ENCODE measurements at regions of chr16 and their contacts with region 1.

Region 1: DNA sequence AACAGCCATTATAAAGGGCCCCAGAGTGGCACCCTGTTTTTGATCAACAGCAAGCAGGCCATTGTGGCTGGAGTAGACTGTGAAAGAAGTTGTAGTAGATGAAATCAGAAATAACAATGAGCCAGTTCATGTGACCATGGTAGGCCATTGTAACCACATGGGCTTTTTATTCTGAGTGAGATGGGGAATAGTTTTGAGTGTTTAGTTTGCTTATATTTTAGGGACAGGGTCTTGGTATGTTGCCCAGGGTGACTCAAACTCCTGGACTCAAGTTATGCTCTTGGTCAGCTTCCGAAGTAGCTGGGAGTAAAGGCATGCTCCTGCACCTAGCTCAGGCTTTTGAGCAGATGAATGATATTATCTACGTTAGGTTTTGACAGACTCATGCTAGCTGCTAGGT is 12.0 kb downstream of the CBFB start:
- DNase-seq: no peak
- ATAC-seq: no peak
- H3K4me3 Mint-ChIP-seq: no peak overlapping the region
- H3K27ac Mint-ChIP-seq: no peak overlapping the region
- H3K4me1 Mint-ChIP-seq: peaks cover 36% of the 10 kb centered on the region
- H3K27me3 Mint-ChIP-seq: no peaks in the 10 kb centered on the region

Region 2: DNA sequence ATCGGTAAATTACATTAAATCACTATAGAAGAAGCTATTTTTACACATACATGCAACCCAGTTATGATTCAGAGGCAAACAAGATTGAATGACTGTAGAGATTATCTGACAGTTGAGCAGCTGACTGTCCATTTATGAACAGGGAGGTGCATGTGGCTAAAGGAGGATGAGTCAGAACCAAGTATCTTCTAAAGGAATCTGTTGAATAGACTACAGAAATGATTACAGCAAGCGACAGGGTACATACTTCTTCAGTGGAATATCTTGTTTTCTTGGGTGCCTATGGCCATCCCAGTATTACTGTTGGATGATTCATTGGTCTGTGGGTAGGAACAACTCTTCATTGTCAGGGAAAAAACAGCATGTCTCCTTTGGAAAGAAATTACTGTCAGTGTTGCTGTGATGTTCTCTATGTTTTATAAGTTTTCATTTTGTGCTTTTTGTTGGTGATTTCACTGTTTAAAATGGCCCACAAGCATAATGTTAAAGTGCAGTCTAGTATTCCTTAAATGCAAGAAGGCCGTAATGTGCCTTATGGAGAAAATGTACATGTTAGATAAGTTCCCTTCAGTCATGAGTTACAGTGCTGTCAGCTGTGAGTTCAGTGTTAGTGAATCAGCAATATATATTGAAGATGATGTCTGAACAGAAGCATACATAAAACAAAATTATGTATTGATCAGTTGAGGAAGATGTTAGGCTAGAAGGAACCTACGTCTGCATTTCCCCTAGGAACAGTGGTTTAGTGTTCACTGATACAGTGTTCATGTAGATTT is 15.0 kb after region 1 on chr16:
- CTCF ChIA-PET with region 1: interaction called, 21 read pairs
- POLR2A ChIA-PET with region 1: interaction called, 3 read pairs
- DNase-seq: no peak
- ATAC-seq: no peak
- H3K4me3 Mint-ChIP-seq: no peak overlapping the region
- H3K27ac Mint-ChIP-seq: peak overlapping the region; percentile 61
- H3K4me1 Mint-ChIP-seq: peaks cover 52% of the 10 kb centered on the region
- H3K27me3 Mint-ChIP-seq: no peaks in the 10 kb centered on the region

Measured in activated CD8-positive, alpha-beta T cell treated with anti-CD3 and anti-CD28 coated beads, Interleukin-2, amount 10 ng/mL, durations not matched to agents 7 days and 5 days (primary cell).